CD4-positive, alpha-beta memory T cell (primary cell): ENCODE measurements at regions of chr6 and their contacts with region 1.

Region 1: DNA sequence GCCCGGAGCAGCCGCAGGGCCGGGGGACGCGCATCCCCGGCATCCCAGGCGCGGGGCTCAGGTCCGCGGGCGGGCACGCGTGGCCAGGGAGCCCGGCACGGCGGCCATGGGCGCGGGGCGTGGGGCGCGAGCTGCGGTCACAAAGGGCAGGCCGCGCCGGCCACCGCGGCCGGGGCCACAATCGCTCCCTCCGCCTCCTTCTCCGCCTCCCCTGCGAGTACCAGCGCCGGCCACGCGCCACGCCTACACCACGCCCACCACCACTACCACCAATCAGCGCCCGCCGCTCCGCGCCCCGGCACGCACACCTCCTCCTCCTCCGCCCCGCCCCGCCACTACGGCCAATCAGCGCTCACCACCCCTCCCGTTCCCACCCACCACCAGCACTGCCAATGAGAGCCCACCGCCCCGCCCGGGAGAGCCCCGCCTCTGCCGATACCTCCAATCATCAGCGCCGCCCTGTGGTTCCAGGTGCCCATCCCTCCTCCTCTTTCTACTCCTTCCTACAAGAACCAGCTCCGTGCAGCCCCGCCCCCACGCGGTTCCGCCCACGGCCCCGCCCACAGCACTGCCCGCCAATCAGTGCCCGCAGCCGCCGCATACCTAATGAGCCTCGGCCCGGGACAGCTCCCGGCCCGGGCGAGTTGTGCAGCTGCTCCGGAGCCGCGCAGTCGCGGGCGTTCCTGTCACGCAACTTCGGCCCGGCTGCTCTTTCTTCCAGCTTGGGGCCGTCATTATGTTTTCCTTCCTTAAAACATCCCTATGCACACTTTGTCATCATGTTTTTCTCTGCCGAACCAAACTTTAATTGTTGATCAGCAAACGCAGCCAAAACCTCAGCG is at the start of gene RPS6KA2:
- DNase-seq: peak; percentile 100
- H3K4me3 ChIP-seq: peak within 1 kb of the TSS; percentile 71 to 76
- H3K4me3 Mint-ChIP-seq: peak within 1 kb of the TSS; percentile 87 to 97 (median 90)
- H3K27ac ChIP-seq: peak within 1 kb of the TSS; percentile 25
- H3K27ac Mint-ChIP-seq: peak within 1 kb of the TSS; percentile 89 to 97 (median 95)
- H3K4me1 ChIP-seq: peaks cover 20% of the 10 kb centered on the region
- H3K4me1 Mint-ChIP-seq: peaks cover 12 to 25% (median 15%) of the 10 kb centered on the region in 4 donors
- H3K27me3 ChIP-seq: peaks cover 8% of the 10 kb centered on the region
- H3K27me3 Mint-ChIP-seq: peaks cover 21 to 39% of the 10 kb centered on the region in 2 donors
- total RNA-seq, gene RPS6KA2: 9.7 to 10.6 TPM

Region 2: GRCh38 chr6:166342349-166343149 is 284.7 kb before region 1 on chr6 and contains the start of gene SFT2D1:
- CTCF ChIA-PET with region 1: no interaction called
- POLR2A ChIA-PET with region 1: interaction called, 10 read pairs
- intact Hi-C with region 1: loop called (anchors 2 kb)
- DNase-seq: peak; percentile 48 to 70 (median 57)
- H3K4me3 ChIP-seq: peak within 1 kb of the TSS; percentile 26 to 93
- H3K4me3 Mint-ChIP-seq: peak within 1 kb of the TSS; percentile 88 to 94 (median 92)
- H3K27ac ChIP-seq: peak within 1 kb of the TSS; percentile 64
- H3K27ac Mint-ChIP-seq: peak within 1 kb of the TSS; percentile 66 to 94 (median 91)
- H3K4me1 ChIP-seq: peaks cover 49% of the 10 kb centered on the region
- H3K4me1 Mint-ChIP-seq: peaks cover 5 to 18% (median 11%) of the 10 kb centered on the region in 4 donors
- H3K27me3 ChIP-seq: no peaks in the 10 kb centered on the region
- H3K27me3 Mint-ChIP-seq: no peaks in the 10 kb centered on the region
- total RNA-seq, gene SFT2D1: 37.5 to 40.3 TPM

Region 3: GRCh38 chr6:166419286-166419685 is 208.0 kb before region 1 on chr6:
- CTCF ChIA-PET with region 1: no interaction called
- POLR2A ChIA-PET with region 1: interaction called, 11 read pairs
- intact Hi-C with region 1: loop called (anchors 1 kb)
- DNase-seq: peak; percentile 45 to 82 (median 53)
- H3K4me3 ChIP-seq: no peak overlapping the region
- H3K4me3 Mint-ChIP-seq: peak overlapping the region in 7 of 8 donors; percentile 55 to 79 (median 70)
- H3K27ac ChIP-seq: peak overlapping the region; percentile 42
- H3K27ac Mint-ChIP-seq: peak overlapping the region; percentile 96 to 99 (median 98)
- H3K4me1 ChIP-seq: peaks cover 74% of the 10 kb centered on the region
- H3K4me1 Mint-ChIP-seq: peaks cover 55 to 74% (median 68%) of the 10 kb centered on the region in 4 donors
- H3K27me3 ChIP-seq: no peaks in the 10 kb centered on the region
- H3K27me3 Mint-ChIP-seq: peaks cover 0 to 4% of the 10 kb centered on the region in 2 donors

Region 4: DNA sequence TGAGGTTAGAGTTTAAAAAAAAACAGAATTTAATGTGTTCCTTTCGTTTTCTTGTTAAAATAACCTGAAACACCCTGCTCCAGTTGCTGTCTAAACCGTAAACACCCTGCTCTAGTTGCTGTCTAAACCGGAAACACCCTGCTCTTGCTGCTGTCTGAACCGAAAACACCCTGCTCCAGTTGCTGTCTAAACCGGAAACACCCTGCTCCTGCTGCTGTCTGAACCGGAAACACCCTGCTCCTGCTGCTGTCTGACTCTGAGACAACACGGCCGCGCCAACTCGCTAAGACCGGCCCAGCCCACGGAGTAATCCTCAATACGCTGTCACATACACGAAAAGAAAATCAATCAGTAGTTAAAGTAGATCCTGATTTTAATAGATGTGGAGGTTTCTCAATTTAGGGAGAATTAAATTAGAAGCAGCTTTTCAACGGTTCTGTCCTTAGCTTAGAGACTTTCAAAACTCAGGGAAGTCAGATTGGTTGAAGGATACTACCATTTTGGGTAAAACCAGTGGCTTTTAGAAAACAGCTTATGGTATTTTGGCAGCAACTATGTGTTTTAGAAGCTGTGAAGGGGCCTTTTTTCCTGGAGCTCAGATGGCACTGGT is 139.1 kb before region 1 on chr6:
- CTCF ChIA-PET with region 1: interaction called, 3 read pairs
- POLR2A ChIA-PET with region 1: interaction called, 8 read pairs
- intact Hi-C with region 1: loop called (anchors 2 kb)
- DNase-seq: peak; percentile 79 to 92 (median 85)
- H3K4me3 ChIP-seq: peak overlapping the region in 1 of 2 donors; percentile 39
- H3K4me3 Mint-ChIP-seq: peak overlapping the region; percentile 69 to 89 (median 82)
- H3K27ac ChIP-seq: peak overlapping the region; percentile 61
- H3K27ac Mint-ChIP-seq: peak overlapping the region; percentile 83 to 99 (median 92)
- H3K4me1 ChIP-seq: peaks cover 24% of the 10 kb centered on the region
- H3K4me1 Mint-ChIP-seq: peaks cover 17 to 37% (median 30%) of the 10 kb centered on the region in 4 donors
- H3K27me3 ChIP-seq: no peaks in the 10 kb centered on the region
- H3K27me3 Mint-ChIP-seq: no peaks in the 10 kb centered on the region

Region 5: GRCh38 chr6:166540631-166541331 is 86.5 kb before region 1 on chr6:
- CTCF ChIA-PET with region 1: no interaction called
- POLR2A ChIA-PET with region 1: interaction called, 29 read pairs
- intact Hi-C with region 1: loop called (anchors 1 kb)
- DNase-seq: peak; percentile 64 to 88 (median 70)
- H3K4me3 ChIP-seq: peak overlapping the region in 1 of 2 donors; percentile 51
- H3K4me3 Mint-ChIP-seq: peak overlapping the region; percentile 72 to 92 (median 88)
- H3K27ac ChIP-seq: peak overlapping the region; percentile 66
- H3K27ac Mint-ChIP-seq: peak overlapping the region; percentile 81 to 97 (median 91)
- H3K4me1 ChIP-seq: peaks cover 24% of the 10 kb centered on the region
- H3K4me1 Mint-ChIP-seq: peaks cover 18 to 38% (median 28%) of the 10 kb centered on the region in 4 donors
- H3K27me3 ChIP-seq: no peaks in the 10 kb centered on the region
- H3K27me3 Mint-ChIP-seq: no peaks in the 10 kb centered on the region

Region 6: DNA sequence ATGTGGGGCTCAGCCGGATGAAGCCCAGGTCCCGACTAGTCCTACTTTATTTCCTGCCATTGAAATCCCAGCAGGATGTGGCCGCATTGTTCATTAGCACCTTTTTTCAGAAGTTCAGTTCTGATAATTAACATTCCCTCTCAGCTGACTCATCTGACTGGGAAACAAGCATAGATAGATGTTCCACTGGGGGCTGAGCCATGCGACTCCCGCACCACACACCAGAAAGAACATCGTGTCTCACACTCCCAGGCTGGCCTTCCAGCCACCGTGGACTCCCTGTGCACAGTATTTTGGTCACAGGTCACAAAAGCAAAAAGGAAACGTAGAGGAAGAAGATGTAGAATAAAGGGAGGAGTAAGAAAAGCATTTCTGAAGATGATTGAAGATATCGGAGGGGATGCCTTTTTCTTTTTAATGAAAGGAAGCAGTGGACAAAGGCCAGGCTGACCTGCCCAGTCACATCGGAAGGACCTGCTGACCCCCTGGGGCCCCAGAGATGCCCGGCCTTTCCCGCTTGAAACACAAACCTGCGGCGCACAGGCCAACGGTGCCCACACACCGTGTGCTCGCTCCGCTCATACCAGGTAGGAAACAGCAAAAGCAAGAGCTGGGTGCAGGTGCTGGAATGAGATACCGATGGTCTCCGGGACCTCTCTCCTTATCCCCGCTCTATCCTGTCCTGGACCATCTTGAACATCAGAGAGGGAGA is 12.0 kb before region 1 on chr6:
- CTCF ChIA-PET with region 1: no interaction called
- POLR2A ChIA-PET with region 1: no interaction called
- intact Hi-C with region 1: no loop called
- DNase-seq: no peak
- H3K4me3 ChIP-seq: no peak overlapping the region
- H3K4me3 Mint-ChIP-seq: no peak overlapping the region
- H3K27ac ChIP-seq: no peak overlapping the region
- H3K27ac Mint-ChIP-seq: no peak overlapping the region
- H3K4me1 ChIP-seq: no peaks in the 10 kb centered on the region
- H3K4me1 Mint-ChIP-seq: peaks cover 0 to 1% (median 0%) of the 10 kb centered on the region in 4 donors
- H3K27me3 ChIP-seq: no peaks in the 10 kb centered on the region
- H3K27me3 Mint-ChIP-seq: no peaks in the 10 kb centered on the region

Region 7: GRCh38 chr6:166999145-166999883 is 372.1 kb after region 1 on chr6 and contains the start of gene CEP43:
- CTCF ChIA-PET with region 1: no interaction called
- POLR2A ChIA-PET with region 1: no interaction called
- intact Hi-C with region 1: loop called (anchors 2 kb)
- DNase-seq: peak; percentile 81 to 89 (median 87)
- H3K4me3 ChIP-seq: peak within 1 kb of the TSS; percentile 85 to 95
- H3K4me3 Mint-ChIP-seq: peak within 1 kb of the TSS; percentile 90 to 95 (median 94)
- H3K27ac ChIP-seq: peak within 1 kb of the TSS; percentile 81
- H3K27ac Mint-ChIP-seq: peak within 1 kb of the TSS; percentile 65 to 93 (median 91)
- H3K4me1 ChIP-seq: peaks cover 38% of the 10 kb centered on the region
- H3K4me1 Mint-ChIP-seq: peaks cover 21 to 35% (median 30%) of the 10 kb centered on the region in 4 donors
- H3K27me3 ChIP-seq: no peaks in the 10 kb centered on the region
- H3K27me3 Mint-ChIP-seq: no peaks in the 10 kb centered on the region
- total RNA-seq, gene CEP43: 19.5 to 24.9 TPM

Region 8: GRCh38 chr6:167826230-167826895 is 1199.1 kb after region 1 on chr6:
- CTCF ChIA-PET with region 1: no interaction called
- POLR2A ChIA-PET with region 1: no interaction called
- intact Hi-C with region 1: loop called (anchors 5 kb)
- DNase-seq: peak; percentile 59 to 71 (median 67)
- H3K4me3 ChIP-seq: peak overlapping the region; percentile 52 to 73
- H3K4me3 Mint-ChIP-seq: peak overlapping the region; percentile 84 to 92 (median 89)
- H3K27ac ChIP-seq: peak overlapping the region; percentile 21
- H3K27ac Mint-ChIP-seq: peak overlapping the region; percentile 64 to 92 (median 73)
- H3K4me1 ChIP-seq: peaks cover 20% of the 10 kb centered on the region
- H3K4me1 Mint-ChIP-seq: peaks cover 13 to 37% (median 20%) of the 10 kb centered on the region in 4 donors
- H3K27me3 ChIP-seq: no peaks in the 10 kb centered on the region
- H3K27me3 Mint-ChIP-seq: peaks cover 10 to 20% of the 10 kb centered on the region in 2 donors